ENCODE measurements at regions of chr2 and their contacts with region 1.

Region 1: GRCh38 chr2:23596316-23596885 is 211.4 kb downstream of the KLHL29 start:
- DNase-seq: no peak
- H3K4me3 ChIP-seq: no peak overlapping the region
- H3K27ac ChIP-seq: no peak overlapping the region
- H3K27me3 ChIP-seq: no peaks in the 10 kb centered on the region
- CTCF ChIP-seq: no peak

Region 2: DNA sequence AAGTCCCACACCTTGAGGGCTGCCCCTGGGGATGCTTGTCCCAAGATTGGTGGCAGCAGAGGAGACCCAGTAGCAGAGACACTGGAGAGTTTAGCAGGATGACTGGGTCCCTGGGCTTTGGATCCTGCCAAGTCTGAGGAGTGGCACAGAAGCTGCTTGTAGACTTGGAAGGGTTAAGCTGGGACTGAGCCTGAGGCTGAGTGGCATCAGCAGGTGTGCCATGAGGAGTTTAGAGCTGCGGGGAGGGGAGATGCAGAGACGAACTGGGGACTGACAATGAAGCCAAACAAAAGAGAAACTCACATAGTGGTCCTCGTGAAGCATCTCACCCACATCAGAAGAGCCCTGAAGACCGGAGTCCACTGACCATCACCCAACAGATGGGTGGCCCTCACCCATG is 541.1 kb before region 1 on chr2:
- CTCF ChIA-PET with region 1: no interaction called
- POLR2A ChIA-PET with region 1: no interaction called
- DNase-seq: no peak
- H3K4me3 ChIP-seq: no peak overlapping the region
- H3K27ac ChIP-seq: no peak overlapping the region
- H3K27me3 ChIP-seq: no peaks in the 10 kb centered on the region
- CTCF ChIP-seq: no peak

Region 3: GRCh38 chr2:23559561-23560239 is 36.7 kb before region 1 on chr2:
- CTCF ChIA-PET with region 1: interaction called, 10 read pairs
- POLR2A ChIA-PET with region 1: no interaction called
- DNase-seq: no peak
- H3K4me3 ChIP-seq: no peak overlapping the region
- H3K27ac ChIP-seq: no peak overlapping the region
- H3K27me3 ChIP-seq: no peaks in the 10 kb centered on the region
- CTCF ChIP-seq: no peak